WTC11 (cell line): ENCODE measurements at regions of chr2 and their contacts with region 1.

Region 1: GRCh38 chr2:236193051-236193450 is 24.9 kb upstream of the GBX2 start:
- DNase-seq: no peak
- ATAC-seq: peak; percentile 83
- H3K4me3 Mint-ChIP-seq: no peak overlapping the region
- H3K27ac Mint-ChIP-seq: no peak overlapping the region; the same call in 1 of the 2 replicates
- H3K4me1 Mint-ChIP-seq: peaks cover 8% of the 10 kb centered on the region; the same call in 1 of the 2 replicates
- H3K27me3 Mint-ChIP-seq: no peaks in the 10 kb centered on the region
- CTCF ChIP-seq: no peak

Region 2: GRCh38 chr2:236209535-236209934 is 16.5 kb after region 1 on chr2:
- CTCF ChIA-PET with region 1: interaction called, 13 read pairs
- POLR2A ChIA-PET with region 1: no interaction called
- DNase-seq: peak; percentile 44
- ATAC-seq: peak; percentile 68
- H3K4me3 Mint-ChIP-seq: no peak overlapping the region
- H3K27ac Mint-ChIP-seq: no peak overlapping the region
- H3K4me1 Mint-ChIP-seq: peaks cover 18% of the 10 kb centered on the region
- H3K27me3 Mint-ChIP-seq: no peaks in the 10 kb centered on the region
- CTCF ChIP-seq: no peak